ENCODE measurements at regions of chr13 and their contacts with region 1.

Region 1: DNA sequence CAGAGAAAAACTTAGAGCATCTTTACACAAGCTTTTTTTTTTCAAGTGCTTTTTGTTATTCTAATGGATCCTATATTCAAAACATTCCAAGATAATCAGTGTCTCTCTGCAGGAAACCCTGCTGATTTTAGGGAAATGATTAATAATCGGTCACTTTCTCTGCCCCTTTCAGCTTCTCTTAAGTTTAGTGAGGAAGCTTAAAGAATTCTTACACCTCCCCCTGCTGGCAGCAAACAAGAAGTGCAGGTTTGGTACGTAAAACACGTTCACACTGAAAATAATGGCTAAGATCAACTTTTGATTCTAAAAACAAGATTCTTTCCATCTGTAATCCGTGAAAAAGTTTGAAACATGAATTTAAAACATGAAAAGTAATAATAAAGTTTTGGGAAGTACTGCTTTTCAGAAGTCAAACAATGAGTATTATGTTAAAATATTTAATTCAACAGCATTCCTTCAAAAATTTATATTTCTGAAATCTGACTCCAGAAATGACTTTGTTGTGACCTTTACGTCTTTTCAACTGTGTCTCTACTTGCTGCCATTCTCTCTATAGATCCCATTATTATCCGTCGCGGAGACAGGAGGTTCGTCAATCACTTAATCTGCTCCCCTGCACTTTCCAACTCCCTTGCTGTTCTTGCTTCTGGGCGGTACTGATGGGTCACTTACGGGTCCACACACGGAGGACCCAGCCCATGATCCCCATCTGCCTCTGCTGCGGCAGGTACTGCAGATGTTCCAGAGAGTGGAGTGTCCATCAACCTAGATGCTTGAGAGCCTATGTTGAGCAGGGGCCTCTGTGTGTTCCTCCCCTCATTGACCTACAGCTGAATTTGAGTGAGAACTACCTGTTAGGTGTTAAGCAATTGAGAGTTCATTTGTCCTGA is 203.1 kb upstream of the EDNRB start:
- DNase-seq: peak; percentile 21
- H3K4me3 ChIP-seq: no peak overlapping the region
- H3K27ac ChIP-seq: no peak overlapping the region
- H3K4me1 ChIP-seq: peaks cover 4% of the 10 kb centered on the region
- H3K27me3 ChIP-seq: peaks cover 6% of the 10 kb centered on the region
- CTCF ChIP-seq: peak; percentile 81

Region 2: GRCh38 chr13:77599351-77599750 is 522.4 kb before region 1 on chr13:
- CTCF ChIA-PET with region 1: no interaction called
- dilution Hi-C with region 1: no loop called
- in situ Hi-C with region 1: no loop called
- intact Hi-C with region 1: loop called (anchors 10 kb)
- DNase-seq: no peak
- H3K4me3 ChIP-seq: no peak overlapping the region
- H3K27ac ChIP-seq: no peak overlapping the region
- H3K4me1 ChIP-seq: no peaks in the 10 kb centered on the region
- H3K27me3 ChIP-seq: peaks cover 3% of the 10 kb centered on the region
- CTCF ChIP-seq: no peak

Region 3: DNA sequence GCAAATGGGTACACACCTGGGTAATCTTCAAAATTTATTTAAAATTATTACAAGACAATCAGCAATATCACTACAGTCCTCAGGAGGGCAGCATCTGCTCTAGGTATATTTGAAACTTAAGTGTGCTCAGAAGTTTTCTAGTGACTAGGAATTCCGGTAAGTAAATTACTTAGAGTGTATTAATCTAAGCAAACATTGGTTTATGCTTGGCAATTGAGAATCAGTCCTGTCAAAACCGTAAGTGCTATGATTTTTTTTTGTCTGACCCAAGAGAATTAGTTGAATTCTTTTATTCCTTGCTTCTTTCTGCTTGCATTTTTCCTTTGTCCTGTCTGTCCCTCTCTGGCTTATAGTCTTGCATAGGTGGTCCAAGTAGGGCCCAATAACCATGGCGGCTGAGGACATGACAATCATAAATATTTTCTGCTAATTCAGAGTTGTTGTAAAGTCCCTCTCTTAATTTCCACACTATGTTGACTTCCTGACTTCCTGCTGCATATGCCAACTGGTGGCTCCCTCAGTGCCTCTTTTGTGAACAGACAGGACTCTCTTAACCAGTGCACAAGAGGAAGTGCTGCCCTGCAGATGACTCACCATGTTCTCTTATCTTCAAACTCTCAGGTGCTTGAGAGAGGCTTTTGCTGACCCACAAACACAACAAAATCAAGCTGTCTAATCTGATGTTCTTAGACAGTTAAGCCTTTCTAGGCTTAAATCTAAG is 342.0 kb before region 1 on chr13:
- CTCF ChIA-PET with region 1: interaction called, 5 read pairs
- dilution Hi-C with region 1: no loop called
- in situ Hi-C with region 1: loop called in 1 of 2 experiments (anchors 5 kb)
- intact Hi-C with region 1: loop called (anchors 1 kb)
- DNase-seq: peak; percentile 22
- H3K4me3 ChIP-seq: no peak overlapping the region
- H3K27ac ChIP-seq: no peak overlapping the region
- H3K4me1 ChIP-seq: no peaks in the 10 kb centered on the region
- H3K27me3 ChIP-seq: no peaks in the 10 kb centered on the region
- CTCF ChIP-seq: peak; percentile 55 to 64

Region 4: GRCh38 chr13:77810430-77810829 is 311.3 kb before region 1 on chr13:
- CTCF ChIA-PET with region 1: interaction called, 14 read pairs
- dilution Hi-C with region 1: no loop called
- in situ Hi-C with region 1: no loop called
- intact Hi-C with region 1: no loop called
- DNase-seq: peak; percentile 8
- H3K4me3 ChIP-seq: no peak overlapping the region
- H3K27ac ChIP-seq: no peak overlapping the region
- H3K4me1 ChIP-seq: no peaks in the 10 kb centered on the region
- H3K27me3 ChIP-seq: peaks cover 4% of the 10 kb centered on the region
- CTCF ChIP-seq: peak; percentile 57 to 58

Region 5: DNA sequence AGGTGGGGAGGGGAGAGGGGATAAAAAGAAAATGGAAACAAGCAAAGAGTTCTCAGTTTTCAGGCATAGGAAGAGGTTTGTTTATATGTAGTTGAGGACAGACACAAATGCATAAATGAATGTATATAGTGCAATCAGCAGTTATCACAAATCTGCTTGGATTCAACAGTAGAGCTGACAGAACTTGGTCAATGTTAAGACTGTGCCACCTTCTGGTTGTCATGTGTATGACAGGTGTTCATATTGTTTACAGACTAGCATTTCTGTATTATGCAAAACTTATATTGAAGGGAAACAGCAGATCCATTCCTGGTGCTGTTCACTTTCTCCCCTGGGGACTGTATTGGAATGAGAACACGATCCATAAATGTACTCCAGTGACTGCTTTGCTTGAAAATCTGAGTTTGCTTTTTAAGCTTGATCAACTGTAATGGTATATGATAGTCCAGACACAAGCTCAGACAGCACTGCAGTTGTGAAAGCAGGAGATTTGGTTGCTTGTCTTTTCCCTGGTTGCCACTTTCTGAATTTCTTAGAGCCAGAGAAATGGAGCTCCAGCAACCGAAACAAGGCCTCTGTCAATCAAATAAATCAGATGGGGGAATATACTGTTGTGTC is 856.8 kb after region 1 on chr13:
- CTCF ChIA-PET with region 1: no interaction called
- dilution Hi-C with region 1: no loop called
- in situ Hi-C with region 1: loop called in 1 of 2 experiments (anchors 10 kb)
- intact Hi-C with region 1: no loop called
- DNase-seq: peak; percentile 37
- H3K4me3 ChIP-seq: no peak overlapping the region
- H3K27ac ChIP-seq: no peak overlapping the region
- H3K4me1 ChIP-seq: no peaks in the 10 kb centered on the region
- H3K27me3 ChIP-seq: peaks cover 6% of the 10 kb centered on the region
- CTCF ChIP-seq: peak; percentile 64 to 74